CD4-positive, alpha-beta T cell (primary cell): ENCODE measurements at regions of chr21 and their contacts with region 1.

Region 1: GRCh38 chr21:15592271-15592860 is 137.4 kb upstream of the USP25 start:
- DNase-seq: peak in 4 of 14 experiments; percentile 3 to 65 (median 58)
- ATAC-seq: peak; percentile 29
- H3K4me3 ChIP-seq: no peak overlapping the region
- H3K4me3 Mint-ChIP-seq: no peak overlapping the region
- H3K27ac ChIP-seq: no peak overlapping the region
- H3K27ac Mint-ChIP-seq: no peak overlapping the region
- H3K4me1 ChIP-seq: no peaks in the 10 kb centered on the region
- H3K4me1 Mint-ChIP-seq: no peaks in the 10 kb centered on the region
- H3K27me3 ChIP-seq: no peaks in the 10 kb centered on the region
- H3K27me3 Mint-ChIP-seq: no peaks in the 10 kb centered on the region
- CTCF ChIP-seq: peak; percentile 61

Region 2: DNA sequence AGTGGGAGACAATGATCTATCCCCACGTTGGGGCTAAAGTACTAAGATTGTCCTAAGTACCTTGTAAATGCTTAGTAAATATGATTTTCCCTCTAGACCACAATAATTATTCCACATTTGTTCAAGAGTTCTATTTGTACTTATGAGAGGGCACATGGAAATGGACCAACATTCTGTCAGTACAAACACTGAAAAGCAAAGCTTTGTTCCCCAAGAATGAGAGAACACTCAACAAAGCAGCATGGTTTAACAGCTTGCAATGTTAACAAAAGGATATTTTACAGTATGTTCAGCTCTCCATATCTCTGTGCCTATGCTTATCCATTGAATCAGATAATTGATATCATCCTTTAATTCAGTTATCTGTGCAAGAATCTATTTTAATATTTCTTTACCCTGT is 1341.0 kb before region 1 on chr21:
- CTCF ChIA-PET with region 1: no interaction called
- POLR2A ChIA-PET with region 1: no interaction called
- intact Hi-C with region 1: loop called (anchors 2 to 5 kb)
- DNase-seq: no peak
- ATAC-seq: no peak
- H3K4me3 ChIP-seq: no peak overlapping the region
- H3K4me3 Mint-ChIP-seq: no peak overlapping the region
- H3K27ac ChIP-seq: no peak overlapping the region
- H3K27ac Mint-ChIP-seq: no peak overlapping the region
- H3K4me1 ChIP-seq: peaks cover 3% of the 10 kb centered on the region
- H3K4me1 Mint-ChIP-seq: peaks cover 5% of the 10 kb centered on the region
- H3K27me3 ChIP-seq: no peaks in the 10 kb centered on the region
- H3K27me3 Mint-ChIP-seq: peaks cover 29% of the 10 kb centered on the region
- CTCF ChIP-seq: no peak

Region 3: DNA sequence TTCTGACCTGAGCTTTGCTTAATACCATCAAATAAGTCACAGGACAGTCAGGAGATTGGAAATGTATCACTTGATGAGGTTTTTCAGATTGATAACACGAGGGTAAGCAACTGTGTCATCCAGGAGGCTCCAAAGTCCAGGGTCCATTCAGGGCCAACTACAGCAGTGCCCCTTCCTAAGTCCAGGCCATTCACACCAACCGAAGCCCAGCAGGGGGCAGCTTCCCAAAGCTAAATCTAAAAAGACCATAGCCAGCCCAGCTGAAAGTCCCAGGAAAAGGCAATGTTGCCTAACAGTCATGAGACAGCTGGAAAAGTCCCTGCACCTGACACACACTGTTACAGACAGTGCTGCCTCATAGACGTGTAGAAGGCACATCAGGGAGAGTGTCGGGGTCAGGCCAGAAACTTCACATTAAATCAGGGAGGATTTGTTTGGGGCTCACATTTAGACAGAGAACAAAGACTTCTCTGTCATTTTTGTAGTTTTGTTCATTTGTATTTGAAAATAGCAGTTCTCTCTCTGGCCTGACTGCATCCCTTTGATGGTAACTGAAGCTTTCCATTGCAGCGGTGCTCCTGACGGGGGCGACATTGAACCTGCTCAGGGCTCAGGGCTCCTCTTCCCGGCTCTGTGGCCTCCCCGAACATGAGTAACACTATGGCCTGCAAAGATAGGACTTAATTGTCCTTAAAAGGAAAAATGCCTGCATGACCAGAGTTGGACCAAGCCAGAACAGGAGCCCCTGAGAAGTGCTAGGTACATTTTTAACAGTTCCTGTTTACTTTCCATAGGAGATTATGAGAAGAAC is 728.0 kb before region 1 on chr21:
- CTCF ChIA-PET with region 1: no interaction called
- POLR2A ChIA-PET with region 1: no interaction called
- intact Hi-C with region 1: loop called in 1 of 2 experiments (anchors 5 kb)
- DNase-seq: peak in 5 of 14 experiments; percentile 7 to 66 (median 24)
- ATAC-seq: peak; percentile 49
- H3K4me3 ChIP-seq: no peak overlapping the region
- H3K4me3 Mint-ChIP-seq: no peak overlapping the region
- H3K27ac ChIP-seq: no peak overlapping the region
- H3K27ac Mint-ChIP-seq: no peak overlapping the region
- H3K4me1 ChIP-seq: no peaks in the 10 kb centered on the region
- H3K4me1 Mint-ChIP-seq: peaks cover 6% of the 10 kb centered on the region
- H3K27me3 ChIP-seq: no peaks in the 10 kb centered on the region
- H3K27me3 Mint-ChIP-seq: no peaks in the 10 kb centered on the region
- CTCF ChIP-seq: peak; percentile 29

Region 4: GRCh38 chr21:15617964-15618363 is 25.6 kb after region 1 on chr21:
- CTCF ChIA-PET with region 1: no interaction called
- POLR2A ChIA-PET with region 1: no interaction called
- intact Hi-C with region 1: no loop called
- DNase-seq: no peak
- ATAC-seq: no peak
- H3K4me3 ChIP-seq: no peak overlapping the region
- H3K4me3 Mint-ChIP-seq: no peak overlapping the region
- H3K27ac ChIP-seq: no peak overlapping the region
- H3K27ac Mint-ChIP-seq: no peak overlapping the region
- H3K4me1 ChIP-seq: no peaks in the 10 kb centered on the region
- H3K4me1 Mint-ChIP-seq: no peaks in the 10 kb centered on the region
- H3K27me3 ChIP-seq: no peaks in the 10 kb centered on the region
- H3K27me3 Mint-ChIP-seq: no peaks in the 10 kb centered on the region
- CTCF ChIP-seq: no peak

Region 5: GRCh38 chr21:15729674-15730483 is 137.5 kb after region 1 on chr21 and contains the start of gene USP25:
- CTCF ChIA-PET with region 1: no interaction called
- POLR2A ChIA-PET with region 1: no interaction called
- intact Hi-C with region 1: no loop called
- DNase-seq: peak; percentile 81 to 94 (median 89)
- ATAC-seq: peak; percentile 81
- H3K4me3 ChIP-seq: peak within 1 kb of the TSS; percentile 77
- H3K4me3 Mint-ChIP-seq: peak within 1 kb of the TSS; percentile 98
- H3K27ac ChIP-seq: peak within 1 kb of the TSS; percentile 50 to 71
- H3K27ac Mint-ChIP-seq: peak within 1 kb of the TSS; percentile 85
- H3K4me1 ChIP-seq: peaks cover 20% of the 10 kb centered on the region
- H3K4me1 Mint-ChIP-seq: peaks cover 39% of the 10 kb centered on the region
- H3K27me3 ChIP-seq: no peaks in the 10 kb centered on the region
- H3K27me3 Mint-ChIP-seq: peaks cover 4% of the 10 kb centered on the region
- CTCF ChIP-seq: no peak
- total RNA-seq, gene USP25: 45.0 to 49.2 TPM